WTC11 (cell line): ENCODE measurements at regions of chr14 and their contacts with region 1.

Region 1: GRCh38 chr14:20343092-20343861 is at the start of gene PARP2:
- DNase-seq: peak; percentile 99
- ATAC-seq: peak; percentile 97
- H3K4me3 Mint-ChIP-seq: peak within 1 kb of the TSS; percentile 91
- H3K27ac Mint-ChIP-seq: peak within 1 kb of the TSS; percentile 98
- H3K4me1 Mint-ChIP-seq: peaks cover 8% of the 10 kb centered on the region
- H3K27me3 Mint-ChIP-seq: no peaks in the 10 kb centered on the region
- CTCF ChIP-seq: no peak
- total RNA-seq, gene PARP2: 34.5 to 37.1 TPM (median 36.8 TPM) in 3 replicates

Region 2: GRCh38 chr14:20247646-20248246 is 95.5 kb before region 1 on chr14:
- CTCF ChIA-PET with region 1: no interaction called
- POLR2A ChIA-PET with region 1: no interaction called
- DNase-seq: no peak
- ATAC-seq: peak; percentile 83
- H3K4me3 Mint-ChIP-seq: no peak overlapping the region
- H3K27ac Mint-ChIP-seq: no peak overlapping the region
- H3K4me1 Mint-ChIP-seq: no peaks in the 10 kb centered on the region
- H3K27me3 Mint-ChIP-seq: no peaks in the 10 kb centered on the region; the same call in 1 of the 2 replicates
- CTCF ChIP-seq: no peak

Region 3: GRCh38 chr14:20327005-20327869 is 16.0 kb before region 1 on chr14:
- CTCF ChIA-PET with region 1: interaction called, 13 read pairs
- POLR2A ChIA-PET with region 1: interaction called, 46 read pairs
- DNase-seq: no peak
- ATAC-seq: no peak
- H3K4me3 Mint-ChIP-seq: no peak overlapping the region
- H3K27ac Mint-ChIP-seq: peak overlapping the region; percentile 3
- H3K4me1 Mint-ChIP-seq: peaks cover 30% of the 10 kb centered on the region
- H3K27me3 Mint-ChIP-seq: no peaks in the 10 kb centered on the region
- CTCF ChIP-seq: peak; percentile 56

Region 4: GRCh38 chr14:20332788-20333493 is 10.3 kb before region 1 on chr14 and contains the start of gene CCNB1IP1:
- CTCF ChIA-PET with region 1: interaction called, 13 read pairs
- POLR2A ChIA-PET with region 1: interaction called, 46 read pairs
- DNase-seq: peak; percentile 23
- ATAC-seq: peak; percentile 98
- H3K4me3 Mint-ChIP-seq: peak within 1 kb of the TSS; percentile 94
- H3K27ac Mint-ChIP-seq: peak within 1 kb of the TSS; percentile 98
- H3K4me1 Mint-ChIP-seq: peaks cover 26% of the 10 kb centered on the region
- H3K27me3 Mint-ChIP-seq: no peaks in the 10 kb centered on the region
- CTCF ChIP-seq: no peak
- total RNA-seq, gene CCNB1IP1: 149 to 155 TPM (median 151 TPM) in 3 replicates

Region 5: GRCh38 chr14:20454516-20455354 is 111.5 kb after region 1 on chr14 and contains the starts of genes APEX1 and OSGEP:
- CTCF ChIA-PET with region 1: interaction called, 10 read pairs
- POLR2A ChIA-PET with region 1: interaction called, 20 read pairs
- DNase-seq: peak; percentile 97
- ATAC-seq: peak; percentile 82
- H3K4me3 Mint-ChIP-seq: no peak within 1 kb of the TSS
- H3K27ac Mint-ChIP-seq: no peak within 1 kb of the TSS
- H3K4me1 Mint-ChIP-seq: peaks cover 3% of the 10 kb centered on the region; the same call in 1 of the 2 replicates
- H3K27me3 Mint-ChIP-seq: no peaks in the 10 kb centered on the region
- CTCF ChIP-seq: no peak
- total RNA-seq, gene APEX1: 299 to 324 TPM (median 308 TPM) in 3 replicates
- total RNA-seq, gene OSGEP: 33.3 to 40.0 TPM (median 37.3 TPM) in 3 replicates

Region 6: DNA sequence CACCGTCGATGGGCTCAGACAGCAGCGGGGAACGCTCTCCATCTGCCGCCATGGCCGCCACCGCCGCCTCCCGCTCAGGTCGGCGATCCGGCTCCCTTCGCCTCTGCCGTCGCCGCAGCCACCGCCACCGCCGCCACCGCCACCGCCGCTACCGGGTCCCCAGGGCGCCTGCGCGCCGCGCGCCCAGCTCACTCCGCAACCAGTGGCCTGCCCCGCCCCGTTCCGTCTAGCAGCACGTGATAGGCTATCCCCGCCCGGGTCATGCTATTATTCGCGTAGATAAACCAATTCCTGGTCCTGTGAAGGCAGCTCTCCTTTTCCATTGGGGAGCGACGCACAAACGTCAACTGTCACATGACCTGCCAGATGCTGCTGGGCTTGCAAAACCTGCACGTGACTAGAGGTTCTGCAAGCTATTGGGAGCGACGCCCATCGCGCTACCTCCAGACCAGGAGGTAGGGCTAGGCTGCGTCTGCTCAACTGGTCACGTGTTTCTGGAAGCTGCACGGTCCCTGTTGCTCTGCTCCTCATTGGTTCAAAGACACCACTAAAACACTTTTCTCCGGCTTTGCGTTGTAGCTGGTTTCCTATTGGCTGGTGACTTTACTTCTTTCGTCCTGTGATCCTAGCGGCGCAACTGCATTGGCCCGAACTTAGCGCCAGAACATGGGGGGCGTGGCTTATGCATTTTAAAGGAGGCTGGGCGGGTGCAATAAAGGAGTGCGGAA is 118.2 kb after region 1 on chr14 and contains the start of gene PIP4P1:
- CTCF ChIA-PET with region 1: interaction called, 6 read pairs
- POLR2A ChIA-PET with region 1: interaction called, 33 read pairs
- DNase-seq: peak; percentile 97
- ATAC-seq: peak; percentile 95
- H3K4me3 Mint-ChIP-seq: peak within 1 kb of the TSS; percentile 84
- H3K27ac Mint-ChIP-seq: peak within 1 kb of the TSS; percentile 98
- H3K4me1 Mint-ChIP-seq: peaks cover 16% of the 10 kb centered on the region
- H3K27me3 Mint-ChIP-seq: peaks cover 5% of the 10 kb centered on the region
- CTCF ChIP-seq: no peak
- total RNA-seq, gene PIP4P1: 28.3 to 34.1 TPM (median 29.7 TPM) in 3 replicates

Region 7: DNA sequence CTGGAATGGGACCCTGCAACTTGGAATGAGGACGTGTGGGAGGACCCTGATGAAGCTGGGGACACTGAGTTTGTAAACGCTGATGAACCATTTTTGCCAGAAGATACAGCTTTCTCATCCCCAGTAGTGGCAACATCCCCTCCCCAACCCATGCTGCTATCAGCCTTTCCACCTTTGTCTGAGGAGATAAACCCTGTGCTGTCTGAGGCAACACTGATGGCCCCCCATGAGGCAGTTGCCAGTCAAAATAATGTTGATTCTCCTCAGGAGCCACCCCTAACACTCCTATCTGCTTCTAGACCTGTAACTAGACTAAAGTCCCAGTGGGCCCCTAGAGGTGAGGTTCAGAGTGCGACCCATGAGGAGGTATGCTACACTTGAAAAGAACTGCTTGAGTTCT is 225.1 kb after region 1 on chr14:
- CTCF ChIA-PET with region 1: no interaction called
- POLR2A ChIA-PET with region 1: no interaction called
- DNase-seq: no peak
- ATAC-seq: no peak
- H3K4me3 Mint-ChIP-seq: no peak overlapping the region
- H3K27ac Mint-ChIP-seq: no peak overlapping the region
- H3K4me1 Mint-ChIP-seq: peaks cover 41% of the 10 kb centered on the region
- H3K27me3 Mint-ChIP-seq: no peaks in the 10 kb centered on the region
- CTCF ChIP-seq: no peak

Region 8: GRCh38 chr14:20682435-20683124 is 339.3 kb after region 1 on chr14:
- CTCF ChIA-PET with region 1: interaction called, 6 read pairs
- POLR2A ChIA-PET with region 1: interaction called, 24 read pairs
- DNase-seq: peak; percentile 73
- ATAC-seq: peak; percentile 38
- H3K4me3 Mint-ChIP-seq: no peak overlapping the region
- H3K27ac Mint-ChIP-seq: no peak overlapping the region
- H3K4me1 Mint-ChIP-seq: peaks cover 25% of the 10 kb centered on the region
- H3K27me3 Mint-ChIP-seq: peaks cover 10% of the 10 kb centered on the region
- CTCF ChIP-seq: no peak